ENCODE measurements at regions of chr5 and their contacts with region 1.

Region 1: DNA sequence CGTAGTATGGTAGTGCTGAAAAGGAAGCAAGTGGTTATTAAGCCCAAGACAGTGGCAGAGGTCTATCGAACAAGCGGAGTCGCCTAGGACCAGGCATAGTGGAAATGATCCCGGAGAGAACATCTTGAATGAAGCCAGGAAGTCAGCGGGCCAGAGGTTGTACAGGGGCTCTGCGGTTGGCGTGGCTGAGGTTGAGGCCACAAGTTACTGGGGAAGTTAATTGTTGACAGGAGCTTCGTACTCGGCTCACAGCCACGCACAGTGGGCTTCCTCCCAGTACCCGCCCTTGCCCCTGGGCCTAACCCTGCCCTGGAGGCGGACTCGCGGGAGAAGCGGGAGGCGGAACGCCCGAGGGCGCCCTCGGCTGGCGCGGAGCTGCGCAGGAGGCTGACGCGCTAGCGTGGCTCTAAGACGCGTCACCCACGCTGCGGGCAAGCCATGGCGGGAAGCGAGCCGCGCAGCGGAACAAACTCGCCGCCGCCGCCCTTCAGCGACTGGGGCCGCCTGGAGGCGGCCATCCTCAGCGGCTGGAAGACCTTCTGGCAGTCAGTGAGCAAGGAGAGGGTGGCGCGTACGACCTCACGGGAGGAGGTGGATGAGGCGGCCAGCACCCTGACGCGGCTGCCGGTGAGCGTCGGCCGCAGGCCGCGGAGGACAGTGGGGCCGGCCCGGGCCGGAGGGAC is at the start of gene FBXO4:
- DNase-seq: peak; percentile 85 to 93 (median 91)
- ATAC-seq: peak; percentile 96 to 99 (median 98)
- H3K4me3 ChIP-seq: peak within 1 kb of the TSS; percentile 63 to 93 (median 82)
- H3K27ac ChIP-seq: peak within 1 kb of the TSS; percentile 84 to 98 (median 96)
- H3K4me1 ChIP-seq: peaks cover 0 to 25% (median 11%) of the 10 kb centered on the region in 12 donors
- H3K27me3 ChIP-seq: no peaks in the 10 kb centered on the region
- CTCF ChIP-seq: peak; percentile 38 to 85 (median 56)
- POLR2A ChIP-seq: peak in 1 of 2 donors; percentile 42
- total RNA-seq, gene FBXO4: 2.4 to 8.1 (median 3.4) TPM

Region 2: DNA sequence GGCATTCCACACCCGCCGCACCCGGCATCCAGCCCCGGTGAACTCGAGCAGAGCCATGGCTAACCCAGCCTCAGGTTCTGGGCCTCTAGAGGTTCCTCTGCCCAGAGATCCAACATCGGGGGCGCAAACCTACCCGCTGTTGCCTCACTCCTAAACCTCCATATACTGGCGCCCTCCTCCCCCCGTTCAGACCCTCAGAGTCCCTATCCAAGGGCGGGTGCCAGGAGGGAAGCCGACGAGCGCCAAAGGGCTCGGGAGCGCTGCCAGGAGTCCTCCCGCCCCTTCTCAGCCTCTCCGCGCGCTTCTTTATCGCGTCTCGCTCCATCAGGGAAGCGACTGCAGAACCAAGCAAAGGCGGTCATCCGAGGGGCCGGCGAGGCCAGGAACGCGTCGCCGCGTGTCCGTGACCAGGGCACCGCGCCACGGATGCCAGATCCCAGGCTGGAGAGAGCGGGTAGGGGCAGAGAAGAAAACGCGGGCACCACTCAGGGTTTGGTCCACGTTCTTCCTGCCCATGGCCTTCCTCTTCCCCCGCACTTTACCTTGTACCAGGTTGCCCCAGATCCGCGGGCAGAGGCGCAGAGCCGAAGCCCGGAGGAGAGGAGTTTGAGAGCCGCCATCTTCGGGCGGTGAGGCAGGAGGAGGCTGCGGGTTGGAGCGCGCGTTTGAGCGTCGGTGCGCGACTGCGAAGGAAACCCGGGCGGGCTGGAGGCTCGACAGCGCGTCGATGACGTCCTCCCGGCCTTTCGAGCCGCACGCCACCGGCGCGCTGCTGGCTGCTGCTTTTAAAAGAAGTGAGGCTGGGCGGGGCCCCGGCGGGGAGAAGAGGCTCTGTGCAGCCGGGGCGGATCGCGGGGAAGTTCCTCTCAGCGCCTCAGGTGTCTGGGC is 55.0 kb before region 1 on chr5 and contains the start of gene OXCT1:
- intact Hi-C with region 1: loop called in 2 of 10 experiments (anchors 5 kb)
- DNase-seq: peak; percentile 78 to 92 (median 85)
- ATAC-seq: peak; percentile 64 to 88 (median 84)
- H3K4me3 ChIP-seq: peak within 1 kb of the TSS; percentile 64 to 91 (median 78)
- H3K27ac ChIP-seq: peak within 1 kb of the TSS; percentile 84 to 96 (median 92)
- H3K4me1 ChIP-seq: peaks cover 0 to 35% (median 18%) of the 10 kb centered on the region in 12 donors
- H3K27me3 ChIP-seq: no peaks in the 10 kb centered on the region
- CTCF ChIP-seq: no peak
- POLR2A ChIP-seq: peak in 1 of 2 donors; percentile 67
- total RNA-seq, gene OXCT1: 73.4 to 363 (median 205) TPM

Region 3: GRCh38 chr5:41903892-41904799 is 20.9 kb before region 1 on chr5 and contains the start of gene RIMOC1:
- intact Hi-C with region 1: loop called in 5 of 10 experiments (anchors 1 to 2 kb)
- DNase-seq: peak; percentile 99
- ATAC-seq: peak; percentile 99
- H3K4me3 ChIP-seq: peak within 1 kb of the TSS; percentile 45 to 90 (median 77)
- H3K27ac ChIP-seq: peak within 1 kb of the TSS; percentile 76 to 92 (median 88)
- H3K4me1 ChIP-seq: peaks cover 3 to 47% (median 26%) of the 10 kb centered on the region in 12 donors
- H3K27me3 ChIP-seq: no peaks in the 10 kb centered on the region
- CTCF ChIP-seq: no peak
- POLR2A ChIP-seq: peak in 1 of 2 donors; percentile 63
- total RNA-seq, gene RIMOC1: 7.6 to 24.0 (median 17.7) TPM

Region 4: DNA sequence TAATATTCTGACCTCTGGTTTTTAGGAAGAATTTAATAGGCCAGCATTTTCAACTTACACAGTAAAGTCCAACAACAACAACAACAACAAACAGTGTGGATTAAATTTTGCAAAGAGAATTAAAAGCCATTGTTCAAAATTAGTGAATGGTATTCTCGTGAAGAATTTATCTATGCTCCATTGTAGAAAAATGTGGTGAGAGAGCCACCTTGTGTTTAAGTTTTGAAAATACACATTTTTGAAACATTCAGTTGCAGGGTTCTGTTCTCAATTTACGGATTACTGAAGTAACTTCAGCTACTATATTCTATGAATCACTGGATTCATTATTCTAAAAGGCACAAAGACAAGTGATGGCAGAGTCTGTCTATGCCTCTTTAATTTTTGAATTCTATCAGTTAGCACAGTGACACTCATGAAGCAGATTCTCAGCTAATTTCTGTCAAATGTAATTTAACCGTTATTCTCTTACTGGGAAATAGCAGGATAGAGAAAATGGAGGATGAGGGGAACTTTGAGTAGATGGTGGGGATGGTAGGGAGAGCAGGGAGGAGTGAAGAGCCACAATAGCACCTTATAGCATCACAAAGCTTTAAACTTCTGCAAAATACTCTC is 842.6 kb after region 1 on chr5:
- intact Hi-C with region 1: loop called in 3 of 10 experiments (anchors 10 kb)
- DNase-seq: no peak
- ATAC-seq: peak in 1 of 4 donors; percentile 52
- H3K4me3 ChIP-seq: no peak overlapping the region
- H3K27ac ChIP-seq: no peak overlapping the region
- H3K4me1 ChIP-seq: peaks cover 0 to 4% (median 0%) of the 10 kb centered on the region in 12 donors
- H3K27me3 ChIP-seq: no peaks in the 10 kb centered on the region
- CTCF ChIP-seq: peak; percentile 27 to 71 (median 58)
- POLR2A ChIP-seq: no peak